Esophagus muscularis mucosa (tissue), 4 donors: ENCODE measurements at regions of chr5 and their contacts with region 1.

Region 1: DNA sequence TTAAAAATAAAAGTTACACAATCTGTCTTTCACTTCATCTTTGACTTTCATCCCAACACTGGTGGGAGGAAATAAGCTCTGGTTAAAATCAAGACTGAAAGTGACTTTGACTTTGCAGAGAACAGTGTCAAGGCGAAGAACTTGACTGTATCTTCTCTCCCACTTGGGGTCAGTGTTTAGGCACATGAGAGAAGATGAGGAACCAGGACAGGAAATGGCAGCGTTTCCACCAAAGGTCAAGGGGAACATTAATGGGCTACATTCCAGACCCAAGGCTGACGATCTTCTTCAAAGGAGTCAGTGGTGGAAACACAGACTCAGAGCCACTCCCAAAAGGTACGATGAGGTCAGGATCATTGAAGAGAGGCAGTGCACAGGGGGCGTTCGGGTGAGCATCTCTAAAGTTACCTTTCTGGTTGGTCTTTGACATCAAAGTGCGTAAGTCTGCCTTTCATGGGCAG is 409.6 kb downstream of the ARHGEF28 start:
- DNase-seq: no peak
- H3K4me3 ChIP-seq: no peak overlapping the region
- H3K27ac ChIP-seq: no peak overlapping the region
- H3K4me1 ChIP-seq: peaks cover 0 to 14% (median 13%) of the 10 kb centered on the region in 4 donors
- H3K27me3 ChIP-seq: no peaks in the 10 kb centered on the region
- CTCF ChIP-seq: peak; percentile 32 to 48 (median 38)
- EP300 ChIP-seq: no peak
- POLR2A ChIP-seq: no peak

Region 2: GRCh38 chr5:74357827-74358226 is 322.3 kb after region 1 on chr5:
- intact Hi-C with region 1: no loop called
- DNase-seq: no peak
- H3K4me3 ChIP-seq: no peak overlapping the region
- H3K27ac ChIP-seq: no peak overlapping the region
- H3K4me1 ChIP-seq: no peaks in the 10 kb centered on the region
- H3K27me3 ChIP-seq: no peaks in the 10 kb centered on the region
- CTCF ChIP-seq: no peak
- EP300 ChIP-seq: no peak
- POLR2A ChIP-seq: no peak

Region 3: GRCh38 chr5:74482990-74483389 is 447.4 kb after region 1 on chr5:
- intact Hi-C with region 1: no loop called
- DNase-seq: no peak
- H3K4me3 ChIP-seq: no peak overlapping the region
- H3K27ac ChIP-seq: no peak overlapping the region
- H3K4me1 ChIP-seq: no peaks in the 10 kb centered on the region
- H3K27me3 ChIP-seq: no peaks in the 10 kb centered on the region
- CTCF ChIP-seq: no peak
- EP300 ChIP-seq: no peak
- POLR2A ChIP-seq: no peak

Region 4: GRCh38 chr5:74640450-74640953 is 605.0 kb after region 1 on chr5 and contains the start of gene ENC1:
- intact Hi-C with region 1: loop called (anchors 2 kb)
- DNase-seq: peak; percentile 94
- H3K4me3 ChIP-seq: peak within 1 kb of the TSS; percentile 67 to 76 (median 71)
- H3K27ac ChIP-seq: peak within 1 kb of the TSS; percentile 71 to 85 (median 79)
- H3K4me1 ChIP-seq: peaks cover 36 to 47% (median 37%) of the 10 kb centered on the region in 4 donors
- H3K27me3 ChIP-seq: no peaks in the 10 kb centered on the region
- CTCF ChIP-seq: peak; percentile 29 to 72 (median 32)
- EP300 ChIP-seq: no peak
- POLR2A ChIP-seq: peak; percentile 21
- total RNA-seq, gene ENC1: 8.9 to 23.7 (median 13.1) TPM